ENCODE measurements at regions of chr15 and their contacts with region 1.

Region 1: GRCh38 chr15:38474155-38474757 is 20.3 kb downstream of the FAM98B start:
- DNase-seq: peak; percentile 58
- ATAC-seq: peak; percentile 95
- H3K4me3 Mint-ChIP-seq: no peak overlapping the region
- H3K27ac Mint-ChIP-seq: peak overlapping the region; percentile 7
- H3K4me1 Mint-ChIP-seq: peaks cover 2% of the 10 kb centered on the region
- H3K27me3 Mint-ChIP-seq: no peaks in the 10 kb centered on the region

Region 2: GRCh38 chr15:38461066-38461833 is 13.0 kb before region 1 on chr15:
- CTCF ChIA-PET with region 1: interaction called, 10 read pairs
- POLR2A ChIA-PET with region 1: no interaction called
- DNase-seq: no peak
- ATAC-seq: no peak
- H3K4me3 Mint-ChIP-seq: no peak overlapping the region
- H3K27ac Mint-ChIP-seq: no peak overlapping the region
- H3K4me1 Mint-ChIP-seq: peaks cover 26% of the 10 kb centered on the region
- H3K27me3 Mint-ChIP-seq: no peaks in the 10 kb centered on the region

Region 3: DNA sequence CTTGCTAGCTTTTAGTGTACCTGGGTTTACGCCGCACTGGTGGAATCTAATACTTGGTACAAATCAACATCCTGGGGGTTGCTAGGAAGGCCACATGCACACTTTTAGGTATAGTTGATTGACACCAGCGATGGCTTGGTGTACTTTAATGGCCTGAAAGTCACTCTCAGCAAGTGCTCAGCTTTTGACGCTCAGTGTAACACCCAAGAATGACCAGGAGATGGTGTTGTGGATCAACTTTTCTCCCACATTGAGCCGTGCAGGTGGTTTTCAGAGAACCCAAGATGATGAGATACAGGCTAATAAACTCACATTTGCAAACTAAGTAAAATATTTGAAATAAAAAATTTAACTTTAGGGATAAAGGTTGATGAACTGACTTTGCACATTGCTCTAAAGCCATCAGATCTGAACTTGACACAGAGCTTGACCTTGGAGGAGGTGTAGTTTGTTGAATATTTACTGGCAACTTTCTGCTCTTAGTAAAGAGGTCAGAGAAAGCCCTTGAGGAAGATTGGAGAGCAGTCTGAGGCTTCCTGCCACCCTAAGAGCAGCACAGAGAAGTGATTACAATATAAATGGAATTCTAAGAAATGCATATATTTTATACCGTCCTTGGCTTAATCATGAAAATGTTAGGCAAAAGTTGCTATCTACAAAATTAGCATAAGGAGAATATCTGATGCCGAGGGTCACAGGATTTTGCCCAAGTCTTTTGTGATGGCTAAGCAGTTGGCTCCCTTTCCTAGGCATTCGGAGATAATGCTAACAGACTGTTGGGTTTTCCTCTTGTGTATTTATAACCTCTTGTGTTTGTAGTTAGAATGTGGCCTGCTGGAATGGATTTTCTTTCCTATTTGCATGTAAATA is 233.8 kb after region 1 on chr15:
- CTCF ChIA-PET with region 1: interaction called, 23 read pairs
- POLR2A ChIA-PET with region 1: no interaction called
- DNase-seq: peak; percentile 60
- ATAC-seq: peak; percentile 77
- H3K4me3 Mint-ChIP-seq: no peak overlapping the region
- H3K27ac Mint-ChIP-seq: no peak overlapping the region
- H3K4me1 Mint-ChIP-seq: peaks cover 7% of the 10 kb centered on the region
- H3K27me3 Mint-ChIP-seq: peaks cover 15% of the 10 kb centered on the region